GM18951 (cell line): ENCODE measurements at regions of chr11 and their contacts with region 1.

Region 1: DNA sequence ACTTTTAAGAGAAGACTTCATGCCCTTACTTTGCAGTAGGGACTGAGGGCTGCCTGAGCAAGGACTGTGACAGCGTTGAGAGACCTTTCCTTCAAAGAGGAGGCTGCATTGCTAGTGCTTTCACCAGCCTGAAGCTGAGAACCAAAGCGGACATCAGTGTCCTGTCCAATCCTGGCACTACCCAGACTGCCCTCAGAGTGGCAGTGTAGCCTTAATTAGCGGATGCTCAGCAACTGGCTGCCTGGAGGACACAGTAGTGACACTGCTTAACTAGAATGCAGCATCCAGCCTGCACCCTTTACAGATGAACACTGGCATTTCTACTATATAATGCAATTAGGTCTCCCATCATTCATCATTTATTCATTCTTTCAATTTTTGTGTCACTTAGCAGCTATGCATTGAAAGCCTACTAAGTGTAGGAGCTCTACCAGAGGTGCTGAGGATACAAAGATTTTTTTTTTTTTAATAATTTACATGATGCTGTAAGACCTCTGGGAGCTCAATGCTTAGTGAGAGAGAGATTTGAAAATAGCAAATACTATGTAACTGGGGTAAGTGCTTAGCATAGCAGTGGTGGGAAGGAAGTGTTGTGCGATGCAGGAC is 36.9 kb upstream of the SLC36A4 start:
- POLR2A ChIP-seq: no peak

Region 2: GRCh38 chr11:92861634-92862033 is 373.1 kb before region 1 on chr11:
- in situ Hi-C with region 1: no loop called
- POLR2A ChIP-seq: no peak

Region 3: GRCh38 chr11:93652161-93652597 is 417.5 kb after region 1 on chr11:
- in situ Hi-C with region 1: loop called (anchors 10 kb)
- POLR2A ChIP-seq: no peak